ENCODE measurements at regions of chr2 and their contacts with region 1.

Region 1: DNA sequence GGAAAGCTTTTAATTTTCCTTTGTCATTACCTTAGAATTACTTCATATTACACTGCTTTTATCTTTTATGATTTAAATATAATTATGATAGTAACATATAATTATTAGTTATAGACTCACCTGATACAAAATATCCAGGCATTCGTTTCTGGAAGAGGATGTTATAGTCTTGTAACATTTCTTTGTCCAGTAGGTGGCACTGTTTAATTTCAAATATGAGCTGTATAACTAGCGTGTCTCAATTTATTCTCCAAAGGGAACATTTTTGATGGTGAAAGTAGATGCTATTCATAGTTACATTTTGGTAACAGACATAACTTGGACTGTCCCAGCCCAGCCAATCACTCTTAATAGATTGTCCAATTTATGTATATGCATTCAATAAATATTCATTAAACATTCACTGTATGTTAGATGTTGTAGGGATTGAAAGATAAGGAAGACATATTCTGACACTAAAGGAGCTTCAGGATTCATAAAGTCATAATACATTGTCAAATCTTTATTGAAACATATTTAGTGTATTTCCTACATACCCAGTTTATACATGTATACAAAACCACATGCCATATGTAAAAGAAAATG is 19.2 kb downstream of the DAW1 start:
- DNase-seq: peak; percentile 32
- H3K4me3 ChIP-seq: no peak overlapping the region; a peak in 1 of 4 replicates
- H3K27ac ChIP-seq: no peak overlapping the region
- H3K4me1 ChIP-seq: peaks cover 0 to 6% of the 10 kb centered on the region in 2 experiments; a peak in 1 of 4 replicates
- H3K27me3 ChIP-seq: no peaks in the 10 kb centered on the region
- CTCF ChIP-seq: peak; percentile 68
- EP300 ChIP-seq: no peak
- RAD21 ChIP-seq: peak; percentile 66

Region 2: DNA sequence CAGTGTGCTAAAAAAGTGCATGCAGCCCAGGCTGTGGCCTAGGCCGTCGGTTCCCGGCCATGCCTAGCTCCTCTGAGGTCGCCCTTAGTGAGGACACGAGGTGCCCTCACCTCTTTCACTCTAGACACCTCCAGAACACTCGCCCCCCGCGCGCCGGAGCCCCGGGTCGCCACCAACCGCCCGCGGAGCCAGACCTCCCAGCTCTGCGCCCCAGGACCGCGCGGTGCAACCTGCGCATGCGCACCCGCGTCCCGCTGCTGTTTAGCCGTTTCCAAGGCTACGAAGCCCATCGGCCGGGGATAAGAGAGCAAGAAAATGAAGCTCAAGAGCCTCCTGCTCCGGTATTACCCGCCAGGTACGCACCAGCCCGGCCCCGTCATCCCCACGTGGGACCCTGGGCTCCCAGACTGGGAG is 19.2 kb before region 1 on chr2 and contains the start of gene DAW1:
- CTCF ChIA-PET with region 1: interaction called, 26 read pairs
- POLR2A ChIA-PET with region 1: no interaction called
- DNase-seq: peak; percentile 88
- H3K4me3 ChIP-seq: peak within 1 kb of the TSS in 1 of 2 experiments; percentile 34; a peak in 3 of 4 replicates
- H3K27ac ChIP-seq: peak within 1 kb of the TSS in 1 of 2 experiments; percentile 85; a peak in 3 of 4 replicates
- H3K4me1 ChIP-seq: peaks cover 2 to 23% of the 10 kb centered on the region in 2 experiments; a peak in 3 of 4 replicates
- H3K27me3 ChIP-seq: no peaks in the 10 kb centered on the region
- CTCF ChIP-seq: no peak
- EP300 ChIP-seq: no peak
- RAD21 ChIP-seq: no peak
- polyA plus RNA-seq, gene DAW1: 1.2 and 2.4 TPM in 2 replicates

Region 3: DNA sequence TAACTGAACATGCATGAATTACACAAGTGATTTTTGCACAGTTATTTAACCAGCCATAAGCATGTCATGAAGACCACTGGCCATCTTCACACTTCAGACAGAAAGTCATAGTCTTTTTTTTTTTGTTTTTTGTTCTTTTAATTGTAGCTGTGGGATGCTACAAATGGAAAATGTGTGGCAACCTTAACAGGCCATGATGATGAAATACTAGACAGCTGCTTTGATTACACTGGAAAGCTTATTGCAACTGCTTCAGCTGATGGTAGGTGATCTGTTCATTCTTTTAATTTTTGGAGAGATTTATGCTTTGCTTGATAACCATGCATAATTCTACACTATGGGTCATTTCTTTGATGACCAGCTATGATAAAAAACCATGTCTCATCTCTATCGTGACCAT is 16.4 kb after region 1 on chr2:
- CTCF ChIA-PET with region 1: interaction called, 21 read pairs
- POLR2A ChIA-PET with region 1: no interaction called
- DNase-seq: no peak
- H3K4me3 ChIP-seq: no peak overlapping the region
- H3K27ac ChIP-seq: no peak overlapping the region
- H3K4me1 ChIP-seq: no peaks in the 10 kb centered on the region
- H3K27me3 ChIP-seq: no peaks in the 10 kb centered on the region
- CTCF ChIP-seq: no peak
- EP300 ChIP-seq: no peak
- RAD21 ChIP-seq: no peak